ENCODE measurements at regions of chr14 and their contacts with region 1.

Region 1: GRCh38 chr14:98754343-98755020 is 517.5 kb downstream of the BCL11B start:
- DNase-seq: peak in 1 of 2 donors; percentile 9
- ATAC-seq: peak in 1 of 2 donors; percentile 74
- H3K4me3 ChIP-seq: no peak overlapping the region
- H3K27ac ChIP-seq: no peak overlapping the region
- H3K4me1 ChIP-seq: no peaks in the 10 kb centered on the region
- H3K27me3 ChIP-seq: no peaks in the 10 kb centered on the region
- CTCF ChIP-seq: no peak
- POLR2A ChIP-seq: no peak

Region 2: GRCh38 chr14:98714626-98715425 is 39.7 kb before region 1 on chr14:
- in situ Hi-C with region 1: no loop called
- intact Hi-C with region 1: loop called (anchors 5 kb)
- DNase-seq: peak in 1 of 2 donors; percentile 33
- ATAC-seq: peak; percentile 62 to 74
- H3K4me3 ChIP-seq: no peak overlapping the region
- H3K27ac ChIP-seq: peak overlapping the region in 2 of 4 donors; percentile 14 to 55
- H3K4me1 ChIP-seq: peaks cover 11 to 12% of the 10 kb centered on the region in 2 donors
- H3K27me3 ChIP-seq: no peaks in the 10 kb centered on the region
- CTCF ChIP-seq: no peak
- POLR2A ChIP-seq: no peak